Aorta (tissue), 5 donors: ENCODE measurements at regions of chr2 and their contacts with region 1.

Region 1: GRCh38 chr2:50395510-50396297 is 636.2 kb downstream of the NRXN1 start:
- DNase-seq: no peak
- ATAC-seq: no peak
- H3K4me3 ChIP-seq: no peak overlapping the region
- H3K27ac ChIP-seq: no peak overlapping the region
- H3K4me1 ChIP-seq: no peaks in the 10 kb centered on the region
- H3K27me3 ChIP-seq: no peaks in the 10 kb centered on the region

Region 2: GRCh38 chr2:50133766-50134165 is 261.9 kb before region 1 on chr2:
- intact Hi-C with region 1: loop called in 1 of 2 experiments (anchors 10 kb)
- DNase-seq: no peak
- ATAC-seq: no peak
- H3K4me3 ChIP-seq: no peak overlapping the region
- H3K27ac ChIP-seq: no peak overlapping the region
- H3K4me1 ChIP-seq: no peaks in the 10 kb centered on the region
- H3K27me3 ChIP-seq: no peaks in the 10 kb centered on the region

Region 3: DNA sequence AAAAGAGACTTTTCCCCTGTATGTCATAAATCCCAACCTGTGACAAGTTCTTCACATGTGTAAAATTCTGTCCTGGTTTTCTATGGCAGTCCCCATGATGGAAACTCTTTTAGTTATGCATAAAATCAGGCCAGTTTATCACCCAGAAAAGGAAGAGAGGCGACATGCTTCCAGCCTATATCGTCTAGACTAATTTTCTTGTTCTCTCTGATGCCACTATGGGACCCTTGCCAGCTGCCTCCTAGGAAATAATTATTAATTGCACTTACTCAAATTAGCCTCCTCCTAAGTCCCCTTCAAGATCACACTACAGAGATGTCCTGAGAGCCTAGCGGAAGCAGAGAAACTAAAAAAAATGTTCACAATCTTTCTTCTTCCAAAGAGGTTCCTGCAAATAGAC is 86.2 kb before region 1 on chr2:
- intact Hi-C with region 1: no loop called
- DNase-seq: no peak
- ATAC-seq: no peak
- H3K4me3 ChIP-seq: no peak overlapping the region
- H3K27ac ChIP-seq: no peak overlapping the region
- H3K4me1 ChIP-seq: no peaks in the 10 kb centered on the region
- H3K27me3 ChIP-seq: no peaks in the 10 kb centered on the region

Region 4: GRCh38 chr2:50333529-50334228 is 62.0 kb before region 1 on chr2:
- intact Hi-C with region 1: no loop called
- DNase-seq: no peak
- ATAC-seq: no peak
- H3K4me3 ChIP-seq: no peak overlapping the region
- H3K27ac ChIP-seq: no peak overlapping the region
- H3K4me1 ChIP-seq: no peaks in the 10 kb centered on the region
- H3K27me3 ChIP-seq: no peaks in the 10 kb centered on the region

Region 5: GRCh38 chr2:50492477-50492851 is 96.8 kb after region 1 on chr2:
- intact Hi-C with region 1: no loop called
- DNase-seq: no peak
- ATAC-seq: peak; percentile 80
- H3K4me3 ChIP-seq: no peak overlapping the region
- H3K27ac ChIP-seq: no peak overlapping the region
- H3K4me1 ChIP-seq: peaks cover 0 to 3% of the 10 kb centered on the region in 2 donors
- H3K27me3 ChIP-seq: no peaks in the 10 kb centered on the region

Region 6: DNA sequence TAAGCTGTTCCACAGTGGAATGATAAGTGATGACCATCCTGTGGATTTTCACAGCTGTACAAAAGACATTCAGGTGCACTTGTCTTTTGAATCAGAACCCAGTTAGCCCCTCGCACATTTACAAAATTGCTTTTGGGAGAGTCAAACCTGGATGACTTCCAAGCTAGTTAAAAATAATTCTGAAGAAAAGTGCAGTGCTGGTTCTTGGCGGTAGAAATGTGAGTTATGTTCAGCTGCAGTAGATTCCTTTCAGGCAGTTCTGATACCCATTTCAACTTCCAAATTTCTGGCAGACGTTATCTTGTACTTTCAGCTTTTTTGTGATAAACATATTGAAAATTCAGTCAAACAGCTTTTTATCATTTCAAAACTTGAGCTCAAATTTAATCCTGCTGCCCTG is 311.5 kb after region 1 on chr2:
- intact Hi-C with region 1: no loop called
- DNase-seq: no peak
- ATAC-seq: no peak
- H3K4me3 ChIP-seq: no peak overlapping the region
- H3K27ac ChIP-seq: no peak overlapping the region
- H3K4me1 ChIP-seq: no peaks in the 10 kb centered on the region
- H3K27me3 ChIP-seq: no peaks in the 10 kb centered on the region